ENCODE measurements at regions of chr9 and their contacts with region 1.

Region 1: GRCh38 chr9:120755827-120756434 is 37.3 kb downstream of the FBXW2 start:
- DNase-seq: peak; percentile 83
- H3K4me3 Mint-ChIP-seq: no peak overlapping the region
- H3K27ac Mint-ChIP-seq: peak overlapping the region; percentile 58
- H3K4me1 Mint-ChIP-seq: peaks cover 34% of the 10 kb centered on the region
- H3K27me3 Mint-ChIP-seq: no peaks in the 10 kb centered on the region

Region 2: DNA sequence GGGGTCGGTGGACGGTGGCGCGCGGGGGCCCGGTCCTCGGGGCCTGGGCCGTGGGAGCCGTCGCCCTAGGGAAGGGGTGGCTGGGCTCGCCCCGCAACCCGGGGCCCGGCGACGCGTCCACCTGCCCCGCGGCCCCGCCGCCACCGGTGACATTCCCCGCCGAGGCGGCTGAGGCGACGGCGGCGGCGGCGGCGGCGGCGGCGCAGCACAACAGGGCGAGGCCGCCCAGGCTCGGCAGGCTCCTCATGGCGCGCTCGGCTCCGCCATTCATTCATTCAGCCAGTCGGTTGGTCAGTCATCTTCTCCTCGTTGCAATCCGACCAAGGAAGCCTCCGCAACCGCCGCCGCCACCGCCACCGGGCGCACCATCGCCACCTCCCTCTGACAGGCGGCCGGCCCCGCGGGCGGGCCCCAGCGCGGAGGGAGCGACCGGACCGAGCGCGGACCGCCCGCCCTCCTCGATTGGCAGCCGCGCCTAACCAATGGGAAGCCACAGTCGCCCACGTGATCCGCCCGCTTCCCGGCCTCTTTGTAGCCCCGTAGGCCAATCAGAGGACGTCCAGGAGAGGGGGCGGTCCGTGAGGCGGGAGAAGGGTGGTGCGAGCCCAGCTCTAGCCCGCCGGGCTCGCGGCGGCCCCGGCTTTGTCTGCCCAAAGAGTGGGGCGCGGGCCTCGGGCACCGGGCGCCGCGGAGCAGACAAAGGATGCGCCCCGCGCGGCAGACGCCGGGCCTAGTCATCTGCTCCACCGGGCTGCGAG is 41.7 kb before region 1 on chr9 and contains the start of gene MEGF9:
- CTCF ChIA-PET with region 1: interaction called, 3 read pairs
- intact Hi-C with region 1: loop called (anchors 1 kb)
- DNase-seq: peak; percentile 99
- H3K4me3 Mint-ChIP-seq: peak within 1 kb of the TSS; percentile 84
- H3K27ac Mint-ChIP-seq: peak within 1 kb of the TSS; percentile 30
- H3K4me1 Mint-ChIP-seq: peaks cover 39% of the 10 kb centered on the region
- H3K27me3 Mint-ChIP-seq: no peaks in the 10 kb centered on the region
- total RNA-seq, gene MEGF9: 3.8 TPM

Region 3: GRCh38 chr9:120875954-120876841 is 120.3 kb after region 1 on chr9:
- CTCF ChIA-PET with region 1: interaction called, 4 read pairs
- intact Hi-C with region 1: loop called (anchors 5 kb)
- DNase-seq: peak; percentile 98
- H3K4me3 Mint-ChIP-seq: peak overlapping the region; percentile 85
- H3K27ac Mint-ChIP-seq: peak overlapping the region; percentile 98
- H3K4me1 Mint-ChIP-seq: peaks cover 75% of the 10 kb centered on the region
- H3K27me3 Mint-ChIP-seq: no peaks in the 10 kb centered on the region

Region 4: DNA sequence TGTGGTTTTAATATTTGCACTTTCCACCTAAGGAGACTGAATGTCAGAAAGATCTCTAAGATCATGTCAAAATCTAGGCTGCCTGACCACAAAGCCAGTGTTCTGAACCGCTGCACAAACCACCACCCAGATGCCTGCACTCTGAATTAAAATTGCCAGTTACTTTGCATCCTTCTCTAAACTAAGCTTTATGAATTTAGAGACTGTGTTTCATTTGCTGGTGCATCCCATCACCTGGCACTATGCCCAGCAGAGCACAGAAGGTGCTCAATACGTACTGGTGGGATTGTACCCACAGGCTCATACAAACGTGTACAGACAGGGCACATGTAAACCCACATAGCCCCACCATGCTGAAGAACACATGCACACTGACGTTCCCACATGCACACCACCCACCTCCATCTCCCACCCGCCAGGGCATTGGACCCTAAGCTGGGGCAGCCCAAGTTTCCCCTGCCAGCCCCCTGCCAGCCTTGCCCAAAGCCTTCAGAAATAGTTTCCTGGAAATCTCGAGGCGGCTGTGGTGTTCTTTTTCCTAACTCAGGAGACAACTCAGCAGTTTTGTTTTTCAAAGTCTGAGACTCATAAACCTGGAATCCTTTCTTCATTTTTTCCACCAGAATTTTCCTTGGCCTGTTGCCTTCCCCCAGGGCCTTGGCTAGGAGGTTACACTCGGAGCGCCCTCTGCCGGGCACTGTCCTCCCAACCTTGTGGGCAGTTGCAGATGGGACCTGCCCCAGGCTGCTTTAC is 180.3 kb after region 1 on chr9:
- CTCF ChIA-PET with region 1: interaction called, 15 read pairs
- intact Hi-C with region 1: loop called (anchors 1 kb)
- DNase-seq: peak; percentile 97
- H3K4me3 Mint-ChIP-seq: peak overlapping the region; percentile 49
- H3K27ac Mint-ChIP-seq: peak overlapping the region; percentile 99
- H3K4me1 Mint-ChIP-seq: peaks cover 61% of the 10 kb centered on the region
- H3K27me3 Mint-ChIP-seq: no peaks in the 10 kb centered on the region

Region 5: GRCh38 chr9:121059998-121060636 is 304.2 kb after region 1 on chr9:
- CTCF ChIA-PET with region 1: interaction called, 22 read pairs
- intact Hi-C with region 1: loop called (anchors 1 kb)
- DNase-seq: peak; percentile 44
- H3K4me3 Mint-ChIP-seq: no peak overlapping the region
- H3K27ac Mint-ChIP-seq: no peak overlapping the region
- H3K4me1 Mint-ChIP-seq: peaks cover 16% of the 10 kb centered on the region
- H3K27me3 Mint-ChIP-seq: no peaks in the 10 kb centered on the region

Region 6: GRCh38 chr9:121121582-121122087 is 365.7 kb after region 1 on chr9:
- CTCF ChIA-PET with region 1: interaction called, 3 read pairs
- intact Hi-C with region 1: loop called (anchors 5 kb)
- DNase-seq: peak; percentile 99
- H3K4me3 Mint-ChIP-seq: peak overlapping the region; percentile 73
- H3K27ac Mint-ChIP-seq: peak overlapping the region; percentile 91
- H3K4me1 Mint-ChIP-seq: peaks cover 44% of the 10 kb centered on the region
- H3K27me3 Mint-ChIP-seq: no peaks in the 10 kb centered on the region

Region 7: GRCh38 chr9:121326130-121326838 is 570.4 kb after region 1 on chr9:
- CTCF ChIA-PET with region 1: no interaction called
- intact Hi-C with region 1: loop called (anchors 5 kb)
- DNase-seq: no peak
- H3K4me3 Mint-ChIP-seq: no peak overlapping the region
- H3K27ac Mint-ChIP-seq: no peak overlapping the region
- H3K4me1 Mint-ChIP-seq: peaks cover 5% of the 10 kb centered on the region
- H3K27me3 Mint-ChIP-seq: no peaks in the 10 kb centered on the region

Measured in activated naive CD4-positive, alpha-beta T cell treated with anti-CD3 and anti-CD28 coated beads for 36 hours (primary cell).